K562 (cell line): ENCODE measurements at regions of chr12 and their contacts with region 1.

Region 1: DNA sequence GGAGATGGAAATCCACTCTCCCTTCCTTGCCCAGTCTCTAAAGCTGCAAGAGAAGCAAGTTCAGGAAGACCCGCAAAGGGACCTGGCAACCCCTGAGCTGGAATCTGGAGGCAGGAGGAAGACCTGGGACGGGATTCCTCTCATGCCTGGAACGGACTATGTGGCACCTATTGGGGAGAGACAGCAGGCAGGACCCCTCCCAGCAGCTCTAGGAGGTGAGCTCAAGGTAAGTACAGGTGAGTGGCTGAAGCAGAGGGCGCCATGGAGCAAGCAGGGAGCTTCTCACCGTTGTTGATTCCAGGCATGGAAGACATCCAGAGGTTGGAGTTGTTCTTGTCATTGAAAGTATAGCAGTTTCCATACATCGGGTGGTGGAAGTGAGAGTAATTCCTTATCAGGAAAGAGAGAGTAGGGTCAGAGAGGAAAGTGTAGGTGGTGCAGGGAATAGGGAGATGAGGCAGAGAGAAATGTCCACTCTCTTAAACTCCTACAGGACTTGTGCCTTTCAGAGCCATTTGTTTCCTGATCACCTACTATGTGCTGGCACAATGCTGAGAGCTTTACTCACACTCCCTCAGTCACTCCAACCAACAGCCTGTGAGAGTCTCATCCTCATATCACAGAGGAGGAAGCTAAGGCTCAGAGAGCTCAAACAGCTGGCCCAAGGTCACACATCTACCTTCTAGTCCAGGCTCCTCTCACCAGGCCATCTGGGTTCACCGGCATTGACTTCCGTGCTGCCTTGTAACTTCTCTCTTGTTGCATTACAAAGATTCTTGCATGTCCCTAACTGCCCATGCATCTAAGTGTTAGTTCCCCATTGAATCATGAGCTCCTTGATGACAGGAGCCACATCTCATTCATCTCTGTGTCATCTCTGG is 13.9 kb upstream of the TNFRSF1A start:
- DNase-seq: no peak
- ATAC-seq: no peak
- H3K4me3 ChIP-seq: no peak overlapping the region
- H3K27ac ChIP-seq: no peak overlapping the region
- H3K4me1 ChIP-seq: no peaks in the 10 kb centered on the region; a peak in 1 of 5 replicates
- H3K27me3 ChIP-seq: peaks cover 0 to 13% of the 10 kb centered on the region in 2 experiments; a peak in 2 of 5 replicates
- CTCF ChIP-seq: no peak
- EP300 ChIP-seq: no peak
- POLR2A ChIP-seq: no peak
- RAD21 ChIP-seq: no peak

Region 2: DNA sequence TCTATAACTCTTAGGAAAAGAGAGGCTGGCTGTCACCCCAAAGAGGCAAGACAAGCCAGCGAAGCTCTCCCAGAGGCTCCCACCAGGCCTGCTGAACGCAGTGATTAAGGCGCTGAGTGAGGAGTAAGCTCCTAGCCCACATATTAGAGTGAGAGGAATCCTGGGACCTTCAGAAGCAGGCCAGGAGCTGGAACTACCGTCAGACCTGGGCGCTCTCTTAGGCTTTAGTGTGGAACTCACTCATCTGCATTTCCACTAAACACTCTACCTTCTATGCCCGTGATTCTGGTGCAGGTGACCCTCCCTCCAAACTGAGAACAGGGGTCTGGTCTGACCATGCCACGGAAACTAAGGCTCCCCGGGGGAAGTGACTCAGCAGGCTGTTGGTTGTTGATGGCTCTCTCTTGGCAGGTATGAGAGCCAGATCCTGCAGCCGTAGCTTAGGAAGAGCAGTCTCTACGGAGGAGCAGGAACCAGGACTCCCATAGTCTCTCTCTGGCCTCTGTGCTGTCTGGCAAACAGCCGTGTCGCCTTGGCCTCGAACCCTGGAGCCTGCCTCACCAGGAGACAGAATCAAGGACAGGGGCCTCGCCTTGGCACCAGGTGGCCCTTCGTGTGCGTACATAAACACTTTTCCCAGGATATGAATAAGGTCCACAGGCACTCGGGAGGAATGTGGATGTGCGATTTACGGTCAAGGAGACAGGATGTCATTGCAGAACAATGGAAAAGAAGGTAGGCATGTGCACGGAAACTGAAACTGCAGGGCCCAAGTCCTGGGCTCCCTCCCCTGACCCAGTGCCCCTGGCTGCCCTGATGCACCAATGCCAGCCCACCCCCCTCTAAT is 239.3 kb before region 1 on chr12:
- CTCF ChIA-PET with region 1: no interaction called
- POLR2A ChIA-PET with region 1: no interaction called
- in situ Hi-C with region 1: no loop called
- intact Hi-C with region 1: no loop called
- DNase-seq: no peak
- ATAC-seq: no peak
- H3K4me3 ChIP-seq: no peak overlapping the region
- H3K27ac ChIP-seq: no peak overlapping the region
- H3K4me1 ChIP-seq: no peaks in the 10 kb centered on the region; a peak in 2 of 5 replicates
- H3K27me3 ChIP-seq: peaks cover 11 to 55% of the 10 kb centered on the region in 2 experiments
- CTCF ChIP-seq: no peak
- EP300 ChIP-seq: no peak
- POLR2A ChIP-seq: no peak
- RAD21 ChIP-seq: no peak

Region 3: DNA sequence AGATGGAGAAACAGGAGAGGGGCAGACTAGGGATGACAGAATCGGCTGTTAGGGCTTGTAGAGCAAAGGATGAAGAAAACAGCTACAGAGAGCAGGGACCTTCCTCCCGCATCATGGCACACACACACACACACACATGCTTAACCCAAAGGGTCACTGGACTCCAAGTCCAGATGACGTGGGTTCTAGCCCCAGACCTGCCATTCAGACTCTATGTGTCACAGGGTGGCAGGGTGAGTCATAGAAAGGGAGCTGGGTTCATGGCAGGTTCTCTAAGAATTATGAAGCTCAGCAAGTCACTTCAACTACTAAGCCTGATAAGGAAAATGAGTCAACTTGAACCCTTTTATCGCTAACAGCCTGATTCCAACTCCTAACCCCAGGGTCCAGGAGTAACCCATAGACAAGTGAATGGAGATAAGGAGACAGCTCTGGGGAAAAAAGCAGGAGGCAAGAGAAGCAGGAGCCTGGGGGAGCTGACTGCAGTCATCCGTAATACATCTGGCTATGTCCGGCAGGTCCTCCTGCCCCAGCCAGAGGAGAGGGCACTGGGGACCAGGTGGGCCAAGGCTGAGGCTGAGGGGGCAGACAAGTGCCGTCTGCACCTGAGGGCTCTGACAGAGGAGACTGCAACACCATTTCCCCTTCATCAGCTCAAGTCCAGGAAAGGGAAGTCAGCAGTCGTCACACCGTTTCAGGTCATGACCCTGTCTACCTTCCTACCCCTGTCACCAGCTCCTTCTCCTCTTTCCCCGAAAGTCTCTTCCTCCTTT is 10.2 kb before region 1 on chr12:
- CTCF ChIA-PET with region 1: no interaction called
- POLR2A ChIA-PET with region 1: interaction called, 11 read pairs
- in situ Hi-C with region 1: no loop called
- intact Hi-C with region 1: no loop called
- DNase-seq: peak; percentile 58 to 87 (median 70)
- ATAC-seq: peak; percentile 61
- H3K4me3 ChIP-seq: no peak overlapping the region
- H3K27ac ChIP-seq: peak overlapping the region; percentile 42; the same call in 1 of the 3 replicates
- H3K4me1 ChIP-seq: peaks cover 35 to 40% of the 10 kb centered on the region in 2 experiments
- H3K27me3 ChIP-seq: peaks cover 0 to 19% of the 10 kb centered on the region in 2 experiments; a peak in 2 of 5 replicates
- CTCF ChIP-seq: no peak
- EP300 ChIP-seq: peak; percentile 93
- POLR2A ChIP-seq: no peak
- RAD21 ChIP-seq: no peak